ENCODE measurements at regions of chr21 and their contacts with region 1.

Region 1: GRCh38 chr21:33360881-33361602 is 36.3 kb downstream of the IFNAR1 start:
- DNase-seq: peak; percentile 73
- ATAC-seq: peak; percentile 80
- H3K4me3 Mint-ChIP-seq: peak overlapping the region; percentile 78
- H3K27ac Mint-ChIP-seq: peak overlapping the region; percentile 93
- H3K4me1 Mint-ChIP-seq: peaks cover 41% of the 10 kb centered on the region
- H3K27me3 Mint-ChIP-seq: no peaks in the 10 kb centered on the region
- CTCF ChIP-seq: peak; percentile 87

Region 2: GRCh38 chr21:33332143-33332542 is 28.9 kb before region 1 on chr21:
- CTCF ChIA-PET with region 1: interaction called, 18 read pairs
- POLR2A ChIA-PET with region 1: interaction called, 14 read pairs
- intact Hi-C with region 1: no loop called
- DNase-seq: no peak
- ATAC-seq: peak; percentile 75
- H3K4me3 Mint-ChIP-seq: peak overlapping the region; percentile 68
- H3K27ac Mint-ChIP-seq: peak overlapping the region; percentile 89
- H3K4me1 Mint-ChIP-seq: peaks cover 75% of the 10 kb centered on the region
- H3K27me3 Mint-ChIP-seq: no peaks in the 10 kb centered on the region
- CTCF ChIP-seq: no peak

Region 3: GRCh38 chr21:33374450-33375096 is 13.5 kb after region 1 on chr21:
- CTCF ChIA-PET with region 1: interaction called, 28 read pairs
- POLR2A ChIA-PET with region 1: interaction called, 102 read pairs
- intact Hi-C with region 1: loop called (anchors 1 kb)
- DNase-seq: no peak
- ATAC-seq: peak; percentile 72
- H3K4me3 Mint-ChIP-seq: peak overlapping the region; percentile 59
- H3K27ac Mint-ChIP-seq: peak overlapping the region; percentile 87
- H3K4me1 Mint-ChIP-seq: peaks cover 79% of the 10 kb centered on the region
- H3K27me3 Mint-ChIP-seq: no peaks in the 10 kb centered on the region
- CTCF ChIP-seq: no peak

Region 4: DNA sequence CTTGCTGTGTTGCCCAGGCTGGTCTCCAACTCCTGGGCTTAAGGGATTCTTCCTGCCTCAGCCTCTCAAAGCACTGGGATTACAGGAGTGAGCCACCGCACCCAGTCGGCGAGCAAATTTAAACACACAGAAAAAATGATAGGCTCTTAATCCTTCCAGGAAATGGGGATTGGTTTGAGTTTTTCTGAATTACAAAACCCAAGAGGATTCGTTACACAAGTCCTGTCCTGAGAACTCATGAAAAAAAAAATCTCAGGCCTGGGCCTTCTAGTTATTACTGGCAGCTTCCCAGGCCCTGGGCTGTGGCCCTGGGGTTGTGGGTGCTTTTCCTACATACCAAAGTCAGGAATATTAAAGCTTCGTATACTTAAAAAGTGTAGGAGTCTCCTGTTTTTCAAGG is 35.9 kb after region 1 on chr21:
- CTCF ChIA-PET with region 1: interaction called, 13 read pairs
- POLR2A ChIA-PET with region 1: interaction called, 27 read pairs
- intact Hi-C with region 1: no loop called
- DNase-seq: no peak
- ATAC-seq: no peak
- H3K4me3 Mint-ChIP-seq: no peak overlapping the region
- H3K27ac Mint-ChIP-seq: no peak overlapping the region
- H3K4me1 Mint-ChIP-seq: peaks cover 68% of the 10 kb centered on the region
- H3K27me3 Mint-ChIP-seq: no peaks in the 10 kb centered on the region
- CTCF ChIP-seq: no peak

Region 5: DNA sequence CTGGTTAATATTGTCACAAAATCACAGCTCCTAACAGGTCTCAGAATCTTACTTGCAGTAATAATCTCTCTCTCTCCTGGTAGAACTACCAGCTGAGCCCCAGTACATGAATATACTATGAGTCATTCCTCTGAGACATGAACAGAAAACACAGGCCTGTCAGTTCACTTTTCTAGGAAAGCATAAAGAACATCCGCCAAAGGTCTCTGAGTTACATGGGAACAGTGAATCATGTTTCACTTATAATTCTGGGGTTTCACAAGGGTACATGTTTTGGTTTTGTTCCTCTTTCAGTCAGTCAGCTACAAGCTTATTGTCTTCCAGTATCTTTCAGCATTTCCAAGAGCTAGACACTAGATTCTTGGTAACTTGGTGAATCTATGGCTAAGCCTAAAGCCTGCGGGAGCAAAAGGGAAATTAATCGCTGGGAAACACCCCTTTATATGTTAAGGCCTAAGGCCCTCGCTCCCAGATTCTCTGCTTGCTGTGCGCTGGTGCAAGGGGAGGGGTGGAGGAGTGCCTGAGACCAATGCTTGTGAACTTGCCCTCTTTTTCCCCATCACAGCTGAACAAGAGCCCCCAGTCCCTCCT is 73.8 kb after region 1 on chr21:
- CTCF ChIA-PET with region 1: interaction called, 149 read pairs
- POLR2A ChIA-PET with region 1: interaction called, 13 read pairs
- intact Hi-C with region 1: loop called (anchors 2 kb)
- DNase-seq: no peak
- ATAC-seq: peak; percentile 90
- H3K4me3 Mint-ChIP-seq: peak overlapping the region; percentile 55
- H3K27ac Mint-ChIP-seq: peak overlapping the region; percentile 88
- H3K4me1 Mint-ChIP-seq: peaks cover 64% of the 10 kb centered on the region
- H3K27me3 Mint-ChIP-seq: no peaks in the 10 kb centered on the region
- CTCF ChIP-seq: no peak

Measured in activated B cell treated with CpG ODN at 0.5 μM for 24 hours (primary cell).